GM12878 (cell line): ENCODE measurements at regions of chr14 and their contacts with region 1.

Region 1: DNA sequence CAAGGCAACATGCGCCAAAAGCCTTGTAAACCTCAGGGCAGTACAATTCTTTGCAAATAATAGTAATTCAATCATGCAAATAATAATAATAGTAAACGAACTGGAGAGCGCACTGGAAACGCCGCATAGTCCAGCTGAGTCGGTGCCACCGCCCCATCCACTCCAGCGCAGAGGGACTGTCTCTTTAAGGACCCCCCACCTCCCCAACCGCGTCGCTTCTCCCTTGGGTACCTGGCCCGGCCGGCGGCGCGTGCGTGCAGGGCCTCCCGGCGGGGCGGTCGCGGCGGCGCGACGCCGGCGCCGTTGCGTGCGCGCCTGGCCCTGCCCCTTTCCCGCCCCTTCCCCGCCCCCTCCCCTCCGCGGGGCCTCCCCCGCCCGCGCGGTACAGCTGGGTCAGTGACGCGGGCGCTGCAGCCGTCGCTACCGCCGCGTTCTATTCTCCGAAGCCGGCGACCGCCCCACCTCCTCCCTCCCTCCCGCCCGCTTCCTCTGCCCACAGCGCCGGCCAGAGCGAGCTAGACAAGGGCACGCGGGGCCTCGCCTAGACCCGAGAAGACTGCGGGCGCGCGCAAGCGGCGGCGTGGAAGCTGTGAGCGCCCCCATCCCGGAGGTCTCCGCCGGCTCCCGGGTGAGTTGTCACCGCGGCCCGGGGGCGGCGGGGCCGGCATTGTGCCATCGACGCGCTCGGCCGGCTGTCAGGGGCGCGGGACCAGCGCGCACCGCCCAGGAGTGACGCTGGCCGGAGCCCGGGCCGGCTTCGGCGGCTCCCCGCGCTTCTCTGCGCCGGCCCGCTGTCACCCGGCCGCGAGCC is at the start of gene SUSD6:
- DNase-seq: no peak
- ATAC-seq: peak; percentile 62
- H3K4me3 ChIP-seq: peak within 1 kb of the TSS; percentile 88
- H3K27ac ChIP-seq: peak within 1 kb of the TSS; percentile 97
- H3K4me1 ChIP-seq: peaks cover 21% of the 10 kb centered on the region
- H3K27me3 ChIP-seq: no peaks in the 10 kb centered on the region
- CTCF ChIP-seq: no peak
- EP300 ChIP-seq: no peak
- POLR2A ChIP-seq: peak; percentile 76
- RAD21 ChIP-seq: no peak
- polyA plus RNA-seq, gene SUSD6: 6.6 to 9.4 TPM

Region 2: GRCh38 chr14:69625299-69626131 is 14.1 kb after region 1 on chr14:
- CTCF ChIA-PET with region 1: interaction called, 11 read pairs
- POLR2A ChIA-PET with region 1: interaction called, 7 read pairs
- RAD21 ChIA-PET with region 1: interaction called, 29 read pairs
- SMC1A ChIA-PET with region 1: interaction called, 135 read pairs
- in situ Hi-C with region 1: no loop called
- intact Hi-C with region 1: loop called (anchors 2 kb)
- DNase-seq: peak; percentile 88
- ATAC-seq: peak; percentile 93
- H3K4me3 ChIP-seq: peak overlapping the region; percentile 65
- H3K27ac ChIP-seq: peak overlapping the region; percentile 82
- H3K4me1 ChIP-seq: peaks cover 61% of the 10 kb centered on the region
- H3K27me3 ChIP-seq: no peaks in the 10 kb centered on the region
- CTCF ChIP-seq: no peak
- EP300 ChIP-seq: peak in 1 of 2 experiments; percentile 67; a peak in 1 of 4 replicates
- POLR2A ChIP-seq: peak; percentile 60; the same call in 1 of the 2 replicates
- RAD21 ChIP-seq: peak; percentile 21; the same call in 1 of the 2 replicates

Region 3: DNA sequence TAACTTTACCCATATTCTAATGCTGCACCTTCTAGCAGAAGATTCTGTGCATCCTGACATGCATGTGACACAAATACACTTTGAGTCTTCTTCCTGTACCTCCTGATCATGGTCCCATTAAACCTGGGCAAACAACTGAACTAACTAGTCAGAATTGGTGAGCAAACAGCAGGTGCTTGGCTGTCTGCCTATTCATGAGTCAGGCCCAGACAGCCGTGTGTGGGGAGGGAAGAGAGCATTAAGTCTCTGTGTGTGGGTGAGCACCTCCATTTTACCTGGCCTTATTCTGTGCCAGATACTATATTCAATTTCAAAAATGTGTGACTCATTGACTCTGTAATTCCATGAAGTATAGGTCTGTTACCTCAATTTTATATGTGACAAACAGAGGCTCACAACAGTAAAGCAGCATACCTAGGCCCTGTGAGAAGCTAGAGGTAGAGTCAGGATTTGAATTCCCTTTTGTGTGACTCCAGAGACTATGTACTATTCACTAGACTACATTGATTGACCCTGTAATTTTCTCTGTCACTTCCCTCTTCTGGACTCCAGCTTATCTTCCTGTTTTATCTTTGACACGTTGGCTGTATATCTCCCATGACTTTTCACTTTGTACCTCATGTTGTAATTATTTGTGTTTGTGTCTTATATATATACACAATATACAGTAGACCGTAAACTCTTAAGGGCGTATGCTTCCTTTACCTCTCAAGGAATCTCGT is 32.2 kb after region 1 on chr14:
- CTCF ChIA-PET with region 1: interaction called, 36 read pairs
- POLR2A ChIA-PET with region 1: interaction called, 22 read pairs
- RAD21 ChIA-PET with region 1: interaction called, 178 read pairs
- SMC1A ChIA-PET with region 1: interaction called, 164 read pairs
- in situ Hi-C with region 1: no loop called
- intact Hi-C with region 1: no loop called
- DNase-seq: no peak
- ATAC-seq: no peak
- H3K4me3 ChIP-seq: no peak overlapping the region
- H3K27ac ChIP-seq: peak overlapping the region; percentile 83
- H3K4me1 ChIP-seq: peaks cover 45% of the 10 kb centered on the region
- H3K27me3 ChIP-seq: no peaks in the 10 kb centered on the region
- CTCF ChIP-seq: no peak
- EP300 ChIP-seq: no peak
- POLR2A ChIP-seq: no peak
- RAD21 ChIP-seq: no peak

Region 4: DNA sequence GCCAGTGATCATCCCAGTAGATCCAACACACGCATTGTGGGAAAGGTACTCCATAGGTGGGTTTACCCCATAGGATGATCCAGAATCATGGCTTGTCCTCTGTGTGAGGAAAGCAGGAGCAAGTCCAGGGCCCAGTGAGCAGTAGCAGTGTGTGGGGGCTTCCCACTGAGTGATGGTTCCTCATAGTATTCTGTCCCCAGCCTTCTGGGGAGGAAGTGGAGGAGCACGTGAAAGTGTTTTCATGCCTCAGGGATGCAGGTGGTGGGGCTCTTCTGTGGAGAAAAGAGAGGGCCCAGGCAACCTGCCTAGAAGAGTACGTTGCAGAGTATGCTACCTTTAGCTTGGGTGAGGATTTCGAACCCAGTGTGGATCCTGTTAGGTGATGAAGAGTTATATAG is 56.5 kb after region 1 on chr14:
- CTCF ChIA-PET with region 1: interaction called, 10 read pairs
- POLR2A ChIA-PET with region 1: interaction called, 7 read pairs
- RAD21 ChIA-PET with region 1: interaction called, 11 read pairs
- SMC1A ChIA-PET with region 1: interaction called, 10 read pairs
- in situ Hi-C with region 1: loop called (anchors 10 kb)
- intact Hi-C with region 1: loop called (anchors 2 kb)
- DNase-seq: no peak
- ATAC-seq: peak; percentile 65
- H3K4me3 ChIP-seq: peak overlapping the region; percentile 58
- H3K27ac ChIP-seq: peak overlapping the region; percentile 91
- H3K4me1 ChIP-seq: peaks cover 74% of the 10 kb centered on the region
- H3K27me3 ChIP-seq: no peaks in the 10 kb centered on the region
- CTCF ChIP-seq: no peak
- EP300 ChIP-seq: no peak
- POLR2A ChIP-seq: no peak
- RAD21 ChIP-seq: no peak

Region 5: GRCh38 chr14:69695322-69696203 is 84.2 kb after region 1 on chr14:
- CTCF ChIA-PET with region 1: interaction called, 3 read pairs
- POLR2A ChIA-PET with region 1: interaction called, 4 read pairs
- RAD21 ChIA-PET with region 1: interaction called, 4 read pairs
- SMC1A ChIA-PET with region 1: interaction called, 4 read pairs
- in situ Hi-C with region 1: no loop called
- intact Hi-C with region 1: loop called (anchors 5 kb)
- DNase-seq: no peak
- ATAC-seq: peak; percentile 45
- H3K4me3 ChIP-seq: peak overlapping the region; percentile 36; the same call in 1 of the 2 replicates
- H3K27ac ChIP-seq: peak overlapping the region; percentile 86
- H3K4me1 ChIP-seq: peaks cover 76% of the 10 kb centered on the region
- H3K27me3 ChIP-seq: no peaks in the 10 kb centered on the region
- CTCF ChIP-seq: no peak
- EP300 ChIP-seq: no peak
- POLR2A ChIP-seq: no peak
- RAD21 ChIP-seq: no peak

Region 6: GRCh38 chr14:69715725-69716477 is 104.5 kb after region 1 on chr14:
- CTCF ChIA-PET with region 1: interaction called, 34 read pairs
- POLR2A ChIA-PET with region 1: interaction called, 3 read pairs
- RAD21 ChIA-PET with region 1: interaction called, 15 read pairs
- SMC1A ChIA-PET with region 1: interaction called, 46 read pairs
- in situ Hi-C with region 1: no loop called
- intact Hi-C with region 1: no loop called
- DNase-seq: no peak
- ATAC-seq: no peak
- H3K4me3 ChIP-seq: no peak overlapping the region
- H3K27ac ChIP-seq: no peak overlapping the region
- H3K4me1 ChIP-seq: peaks cover 3% of the 10 kb centered on the region
- H3K27me3 ChIP-seq: no peaks in the 10 kb centered on the region
- CTCF ChIP-seq: no peak
- EP300 ChIP-seq: no peak
- POLR2A ChIP-seq: no peak
- RAD21 ChIP-seq: no peak